Left lung (tissue), 14 donors: ENCODE measurements at regions of chr13 and their contacts with region 1.

Region 1: GRCh38 chr13:32381539-32381938 is 46.4 kb downstream of the N4BP2L1 start:
- DNase-seq: no peak
- ATAC-seq: peak; percentile 46
- H3K4me3 ChIP-seq: no peak overlapping the region
- H3K27ac ChIP-seq: no peak overlapping the region
- H3K4me1 ChIP-seq: no peaks in the 10 kb centered on the region
- H3K27me3 ChIP-seq: no peaks in the 10 kb centered on the region
- CTCF ChIP-seq: peak; percentile 26 to 45

Region 2: DNA sequence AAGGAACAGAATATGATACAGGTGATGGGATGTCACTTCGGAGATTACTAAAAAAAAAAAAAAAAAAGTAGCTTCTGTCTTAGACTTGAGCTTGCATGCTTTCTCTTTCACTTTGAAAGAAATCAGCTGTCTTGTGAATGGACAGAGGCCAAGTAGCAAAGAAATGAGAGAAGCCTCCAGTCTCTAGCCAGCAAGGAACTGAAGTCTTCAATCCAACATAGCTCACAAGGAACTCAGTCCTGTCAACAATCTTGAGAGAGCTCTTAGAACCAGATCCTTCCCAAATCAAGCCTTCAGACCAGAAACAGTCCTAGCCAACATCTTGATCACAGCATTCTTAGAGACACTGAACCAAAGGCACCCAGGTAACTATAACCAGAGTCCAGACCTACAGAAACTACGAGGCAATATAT is 149.3 kb after region 1 on chr13:
- intact Hi-C with region 1: no loop called
- DNase-seq: peak in 2 of 4 donors; percentile 51 to 77
- ATAC-seq: peak; percentile 89
- H3K4me3 ChIP-seq: no peak overlapping the region
- H3K27ac ChIP-seq: peak overlapping the region in 1 of 2 donors; percentile 35
- H3K4me1 ChIP-seq: peaks cover 9 to 76% of the 10 kb centered on the region in 2 donors
- H3K27me3 ChIP-seq: no peaks in the 10 kb centered on the region
- CTCF ChIP-seq: no peak

Region 3: GRCh38 chr13:32553720-32554119 is 172.2 kb after region 1 on chr13:
- intact Hi-C with region 1: no loop called
- DNase-seq: no peak
- ATAC-seq: no peak
- H3K4me3 ChIP-seq: no peak overlapping the region
- H3K27ac ChIP-seq: no peak overlapping the region
- H3K4me1 ChIP-seq: peaks cover 0 to 4% of the 10 kb centered on the region in 2 donors
- H3K27me3 ChIP-seq: no peaks in the 10 kb centered on the region
- CTCF ChIP-seq: no peak

Region 4: DNA sequence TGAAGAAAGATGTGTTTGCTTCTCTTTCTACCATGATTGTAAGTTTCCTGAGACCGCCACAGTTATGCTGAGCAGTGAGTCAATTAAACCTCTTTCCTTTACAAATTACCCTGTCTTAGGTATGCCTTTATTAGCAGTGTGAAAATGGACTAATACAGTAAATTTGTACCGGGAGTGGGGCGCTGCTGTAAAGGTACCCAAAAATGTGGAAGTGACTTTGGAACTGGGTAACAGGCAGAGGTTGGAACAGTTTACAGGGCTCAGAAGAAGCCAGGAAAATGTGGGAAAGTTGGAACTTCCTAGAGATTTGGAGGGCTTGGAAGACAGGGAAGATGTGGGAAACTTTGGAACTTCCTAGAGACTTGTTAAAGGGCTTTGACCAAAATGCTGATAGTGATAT is 195.5 kb after region 1 on chr13:
- intact Hi-C with region 1: loop called in 1 of 2 experiments (anchors 10 kb)
- DNase-seq: no peak
- ATAC-seq: no peak
- H3K4me3 ChIP-seq: no peak overlapping the region
- H3K27ac ChIP-seq: no peak overlapping the region
- H3K4me1 ChIP-seq: no peaks in the 10 kb centered on the region
- H3K27me3 ChIP-seq: no peaks in the 10 kb centered on the region
- CTCF ChIP-seq: no peak